ENCODE measurements at regions of chr1 and their contacts with region 1.

Region 1: DNA sequence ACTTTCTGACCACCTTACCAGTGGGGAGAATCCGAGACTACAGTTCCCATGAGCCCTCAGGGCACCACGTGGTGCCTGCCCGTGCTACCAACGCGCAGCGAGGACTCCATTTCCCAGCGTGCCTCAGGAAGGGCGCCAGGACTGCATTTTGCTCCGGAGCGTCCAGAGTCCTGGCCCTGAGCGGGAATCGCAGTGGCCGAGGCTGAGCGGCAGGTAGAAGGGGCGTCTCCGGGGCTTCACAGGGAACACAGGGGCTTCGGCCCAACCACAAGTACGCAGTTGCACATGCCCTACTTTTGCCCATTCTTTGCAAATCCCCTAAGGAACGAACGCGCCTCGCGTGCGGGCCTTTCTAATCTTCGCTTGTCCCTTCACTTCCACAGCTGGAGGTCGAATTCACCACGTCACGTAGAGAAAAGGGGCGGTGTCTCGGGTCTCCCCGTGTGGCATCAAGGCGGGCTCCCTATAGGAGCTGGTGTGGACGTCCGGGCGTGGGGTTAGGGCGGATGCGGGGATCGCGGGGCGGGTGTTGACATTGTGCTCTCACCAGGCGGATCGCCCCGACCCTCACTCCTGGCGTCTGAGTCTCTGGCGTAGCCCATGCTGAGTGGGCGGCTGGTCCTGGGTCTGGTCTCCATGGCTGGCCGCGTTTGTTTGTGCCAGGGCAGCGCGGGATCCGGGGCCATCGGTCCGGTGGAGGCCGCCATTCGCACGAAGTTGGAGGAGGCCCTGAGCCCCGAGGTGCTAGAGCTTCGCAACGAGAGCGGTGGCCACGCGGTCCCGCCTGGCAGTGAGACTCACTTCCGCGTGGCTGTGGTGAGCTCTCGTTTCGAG is at the start of gene BOLA1:
- DNase-seq: peak; percentile 78 to 85 (median 85)
- H3K4me3 ChIP-seq: peak within 1 kb of the TSS; percentile 49 to 78 (median 63)
- H3K4me3 Mint-ChIP-seq: peak within 1 kb of the TSS; percentile 86 to 93
- H3K27ac ChIP-seq: peak within 1 kb of the TSS; percentile 53 to 78
- H3K27ac Mint-ChIP-seq: peak within 1 kb of the TSS; percentile 84 to 95 (median 91)
- H3K4me1 ChIP-seq: peaks cover 8 to 17% of the 10 kb centered on the region in 2 donors
- H3K4me1 Mint-ChIP-seq: peaks cover 15% of the 10 kb centered on the region
- H3K27me3 ChIP-seq: no peaks in the 10 kb centered on the region
- H3K27me3 Mint-ChIP-seq: peaks cover 0 to 4% (median 0%) of the 10 kb centered on the region in 3 donors
- CTCF ChIP-seq: no peak
- polyA plus RNA-seq, gene BOLA1: 5.1 to 17.8 (median 17.6) TPM

Region 2: DNA sequence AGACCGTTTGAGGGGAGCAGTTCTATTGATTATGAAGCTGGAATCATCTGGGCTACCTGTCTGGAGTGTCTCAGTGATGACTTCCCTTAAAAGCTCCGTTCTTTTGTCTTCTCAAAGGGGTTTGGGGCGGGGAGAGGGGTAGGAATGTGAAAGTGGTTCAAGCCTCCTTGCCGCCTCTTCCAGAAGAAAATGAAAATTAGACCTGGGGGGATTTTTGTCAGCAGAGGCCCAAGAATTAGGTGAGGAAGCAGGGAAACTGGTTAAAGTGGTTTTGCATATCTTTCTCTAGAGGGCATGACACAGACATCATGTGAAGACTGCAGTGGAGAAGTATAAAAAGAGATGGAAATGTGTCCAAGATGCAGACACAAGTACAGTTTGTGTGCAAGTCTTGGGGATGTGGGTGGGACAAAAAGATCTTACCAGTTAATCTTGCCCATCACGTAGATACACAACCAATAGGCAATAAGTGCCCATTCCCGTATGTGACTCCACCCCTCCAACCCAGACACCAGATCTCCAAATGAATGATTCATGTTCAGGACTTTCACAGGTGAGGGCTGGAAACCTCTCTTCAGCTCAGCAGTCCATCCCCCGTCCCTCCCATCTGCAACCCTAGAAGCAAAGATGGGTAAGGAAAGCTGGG is 37.5 kb after region 1 on chr1:
- intact Hi-C with region 1: loop called in 1 of 2 experiments (anchors 5 kb)
- DNase-seq: no peak
- H3K4me3 ChIP-seq: no peak overlapping the region
- H3K4me3 Mint-ChIP-seq: no peak overlapping the region
- H3K27ac ChIP-seq: no peak overlapping the region
- H3K27ac Mint-ChIP-seq: peak overlapping the region in 5 of 7 donors; percentile 11 to 90 (median 58)
- H3K4me1 ChIP-seq: peaks cover 37 to 61% of the 10 kb centered on the region in 2 donors
- H3K4me1 Mint-ChIP-seq: peaks cover 61% of the 10 kb centered on the region
- H3K27me3 ChIP-seq: no peaks in the 10 kb centered on the region
- H3K27me3 Mint-ChIP-seq: peaks cover 0 to 10% (median 0%) of the 10 kb centered on the region in 3 donors
- CTCF ChIP-seq: no peak

Region 3: GRCh38 chr1:150053926-150054325 is 154.2 kb after region 1 on chr1:
- intact Hi-C with region 1: loop called in 1 of 2 experiments (anchors 10 kb)
- DNase-seq: peak; percentile 62 to 80 (median 79)
- H3K4me3 ChIP-seq: peak overlapping the region in 1 of 3 experiments; percentile 11
- H3K4me3 Mint-ChIP-seq: peak overlapping the region in 1 of 2 donors; percentile 11
- H3K27ac ChIP-seq: peak overlapping the region in 1 of 2 donors; percentile 25
- H3K27ac Mint-ChIP-seq: peak overlapping the region; percentile 10 to 80 (median 59)
- H3K4me1 ChIP-seq: peaks cover 41 to 48% of the 10 kb centered on the region in 2 donors
- H3K4me1 Mint-ChIP-seq: peaks cover 51% of the 10 kb centered on the region
- H3K27me3 ChIP-seq: peaks cover 0 to 7% of the 10 kb centered on the region in 2 donors
- H3K27me3 Mint-ChIP-seq: peaks cover 5 to 16% (median 12%) of the 10 kb centered on the region in 3 donors
- CTCF ChIP-seq: no peak

Region 4: GRCh38 chr1:150146849-150147542 is 247.3 kb after region 1 on chr1:
- intact Hi-C with region 1: no loop called
- DNase-seq: no peak
- H3K4me3 ChIP-seq: no peak overlapping the region
- H3K4me3 Mint-ChIP-seq: peak overlapping the region in 1 of 2 donors; percentile 10
- H3K27ac ChIP-seq: no peak overlapping the region
- H3K27ac Mint-ChIP-seq: peak overlapping the region in 1 of 7 donors; percentile 30
- H3K4me1 ChIP-seq: peaks cover 25 to 45% of the 10 kb centered on the region in 2 donors
- H3K4me1 Mint-ChIP-seq: peaks cover 50% of the 10 kb centered on the region
- H3K27me3 ChIP-seq: no peaks in the 10 kb centered on the region
- H3K27me3 Mint-ChIP-seq: peaks cover 10 to 25% (median 19%) of the 10 kb centered on the region in 3 donors
- CTCF ChIP-seq: no peak